Thyroid gland (tissue), 4 donors: ENCODE measurements at regions of chr17 and their contacts with region 1.

Region 1: DNA sequence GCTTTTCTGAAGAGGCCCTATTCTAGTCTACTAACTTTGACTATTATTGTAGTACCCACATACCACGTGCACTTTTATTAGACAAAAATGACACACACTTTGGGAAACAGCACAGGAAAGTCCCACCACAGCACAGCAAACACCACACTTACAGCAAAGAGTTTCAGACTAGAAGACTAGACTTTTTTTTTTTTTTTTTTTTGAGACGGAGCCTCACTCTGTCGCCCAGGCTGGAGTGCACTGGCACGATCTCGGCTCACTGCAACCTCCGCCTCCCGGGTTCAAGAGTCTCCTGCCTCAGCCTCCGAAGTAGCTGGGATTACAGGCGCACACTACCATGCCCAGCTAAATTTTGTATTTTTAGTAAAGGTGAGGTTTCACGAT is 20.1 kb downstream of the YWHAE start:
- DNase-seq: no peak
- H3K4me3 ChIP-seq: no peak overlapping the region
- H3K27ac ChIP-seq: no peak overlapping the region
- H3K4me1 ChIP-seq: peaks cover 83 to 91% of the 10 kb centered on the region in 2 donors
- H3K27me3 ChIP-seq: no peaks in the 10 kb centered on the region
- CTCF ChIP-seq: no peak
- POLR2A ChIP-seq: no peak

Region 2: DNA sequence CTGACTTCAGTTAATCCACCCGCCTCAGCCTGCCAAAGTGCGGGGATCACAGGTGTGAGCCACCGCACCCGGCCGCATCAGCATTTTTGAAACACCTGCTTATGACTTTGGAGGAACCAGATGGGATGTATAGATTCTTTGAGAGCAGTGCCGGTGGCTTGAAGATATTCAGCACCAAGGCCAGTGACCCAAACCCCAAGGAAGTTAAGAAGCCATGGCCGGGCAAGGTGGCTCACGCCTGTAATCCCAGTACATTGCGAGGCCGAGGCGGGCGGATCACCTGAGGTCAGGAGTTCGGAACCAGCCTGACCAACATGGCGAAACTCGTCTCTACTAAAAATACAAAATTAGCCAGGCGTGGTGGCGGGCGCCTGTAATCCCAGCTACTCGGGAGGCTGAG is 56.6 kb before region 1 on chr17:
- intact Hi-C with region 1: no loop called
- DNase-seq: no peak
- H3K4me3 ChIP-seq: no peak overlapping the region
- H3K27ac ChIP-seq: no peak overlapping the region
- H3K4me1 ChIP-seq: no peaks in the 10 kb centered on the region
- H3K27me3 ChIP-seq: no peaks in the 10 kb centered on the region
- CTCF ChIP-seq: no peak
- POLR2A ChIP-seq: no peak

Region 3: DNA sequence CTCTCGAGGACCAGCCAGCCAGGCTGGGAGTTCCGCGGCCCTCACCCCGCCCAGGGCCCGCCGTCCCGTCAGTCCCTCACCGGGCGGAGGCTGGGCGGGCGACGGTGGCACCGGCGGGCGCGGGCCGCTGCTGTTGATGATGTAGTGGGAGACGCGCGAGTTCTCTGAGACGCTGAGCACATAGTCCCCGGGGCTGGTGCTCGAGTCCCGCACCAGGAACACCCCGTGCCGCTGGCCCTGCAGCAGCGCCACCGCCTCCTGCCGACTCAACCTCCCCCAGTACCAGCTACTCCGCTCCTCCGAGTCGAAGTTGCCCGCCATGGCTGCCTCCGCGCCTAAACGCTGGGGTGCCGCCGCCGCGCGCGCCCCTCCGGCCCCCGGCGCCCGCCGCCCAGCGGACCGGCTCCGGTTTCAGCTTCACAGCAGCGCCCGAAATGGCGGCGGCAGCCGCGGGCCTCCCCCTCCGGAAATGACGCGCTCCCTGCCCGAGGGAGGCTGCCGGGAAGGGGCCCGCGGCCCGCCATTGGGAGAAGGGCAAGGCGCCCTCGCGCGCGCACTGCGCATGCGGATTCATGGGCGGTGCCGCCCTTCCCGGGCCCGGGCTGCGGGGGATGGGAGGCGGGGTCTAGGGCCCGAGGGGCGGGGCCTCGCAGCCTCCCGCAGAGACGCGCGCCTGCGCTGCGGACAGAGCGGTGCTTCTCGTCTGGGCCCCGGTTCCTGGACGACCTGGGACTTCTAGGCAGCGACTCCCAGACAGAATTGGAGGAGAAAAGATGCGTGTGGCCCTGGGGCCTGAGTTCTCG is 76.1 kb after region 1 on chr17 and contains the start of gene CRK:
- intact Hi-C with region 1: loop called (anchors 10 kb)
- DNase-seq: peak; percentile 96 to 97
- H3K4me3 ChIP-seq: peak within 1 kb of the TSS; percentile 85 to 100 (median 95)
- H3K27ac ChIP-seq: peak within 1 kb of the TSS; percentile 81 to 98 (median 96)
- H3K4me1 ChIP-seq: peaks cover 40 to 53% of the 10 kb centered on the region in 2 donors
- H3K27me3 ChIP-seq: no peaks in the 10 kb centered on the region
- CTCF ChIP-seq: peak in 1 of 6 experiments; percentile 13
- POLR2A ChIP-seq: peak; percentile 75 to 95
- total RNA-seq, gene CRK: 89.6 to 140 (median 98.7) TPM